A673 (cell line): ENCODE measurements at regions of chr18 and their contacts with region 1.

Region 1: DNA sequence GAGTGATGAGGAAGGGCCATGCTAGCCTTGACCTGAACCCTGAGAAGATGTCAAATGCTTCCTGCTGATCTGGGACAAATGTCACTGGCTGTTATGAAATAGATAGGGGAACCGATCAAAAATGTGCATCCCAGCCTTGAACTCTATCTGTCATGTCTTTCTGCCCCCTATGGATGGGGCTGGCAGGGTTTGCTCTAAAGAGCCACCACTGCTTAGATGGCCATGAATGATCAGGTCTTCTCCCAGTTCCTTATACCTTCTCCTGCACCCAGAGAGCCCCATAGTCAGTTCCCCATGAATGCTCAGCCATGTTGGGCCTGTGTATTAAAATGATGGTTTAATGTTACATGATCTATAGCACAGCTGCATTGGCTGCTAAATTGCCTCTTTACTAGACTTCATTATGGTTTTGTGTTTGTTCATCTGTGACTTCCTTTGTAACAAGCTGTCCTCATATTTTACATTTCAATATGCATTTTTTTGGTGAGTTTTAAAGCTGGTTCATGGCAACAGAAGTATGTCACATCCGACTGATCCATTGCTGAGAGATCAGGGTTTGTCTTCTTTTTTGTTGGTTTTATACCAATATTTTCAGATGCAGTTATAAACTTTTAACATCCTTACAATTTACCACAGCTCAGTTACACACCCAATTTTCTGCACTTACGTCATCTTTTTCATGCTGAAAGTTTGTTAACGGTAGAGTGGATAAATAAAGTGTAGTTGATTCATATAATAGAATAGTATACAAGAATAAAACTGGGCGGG is 56.3 kb upstream of the SMAD2 start:
- DNase-seq: no peak
- H3K4me3 ChIP-seq: no peak overlapping the region
- H3K27ac ChIP-seq: no peak overlapping the region
- H3K4me1 ChIP-seq: no peaks in the 10 kb centered on the region
- H3K27me3 ChIP-seq: no peaks in the 10 kb centered on the region
- CTCF ChIP-seq: no peak

Region 2: DNA sequence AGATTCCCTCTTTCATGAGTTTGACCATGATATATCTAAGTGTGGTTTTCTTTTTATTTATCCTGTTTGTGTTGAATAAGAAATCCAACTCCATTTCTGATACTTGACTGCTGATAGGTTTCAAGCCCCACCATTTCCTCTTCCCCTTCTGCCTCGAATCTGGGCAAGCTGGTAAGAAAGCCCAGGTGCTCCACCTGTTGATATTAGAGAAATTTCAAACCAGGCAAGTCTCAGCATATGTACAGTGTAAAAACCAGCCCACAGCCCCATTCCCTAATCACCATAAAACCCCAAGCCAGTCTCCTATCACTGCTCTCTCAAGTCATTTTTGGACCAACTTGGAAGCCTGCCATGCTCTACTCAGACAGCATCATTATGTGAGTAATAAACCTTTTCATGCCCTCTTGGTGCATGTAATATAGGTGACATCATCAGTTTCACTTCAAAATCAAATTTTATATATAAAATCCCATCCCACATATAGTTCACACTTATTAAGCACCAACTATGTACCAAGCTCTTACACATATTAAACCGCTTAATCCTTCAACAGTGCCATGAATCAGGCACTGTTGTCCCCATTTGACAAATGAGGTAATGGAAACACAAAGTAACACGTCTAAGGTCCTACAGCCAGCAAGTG is 102.9 kb before region 1 on chr18:
- CTCF ChIA-PET with region 1: no interaction called
- POLR2A ChIA-PET with region 1: no interaction called
- intact Hi-C with region 1: no loop called
- DNase-seq: peak; percentile 57
- H3K4me3 ChIP-seq: no peak overlapping the region
- H3K27ac ChIP-seq: no peak overlapping the region
- H3K4me1 ChIP-seq: peaks cover 8% of the 10 kb centered on the region
- H3K27me3 ChIP-seq: no peaks in the 10 kb centered on the region
- CTCF ChIP-seq: no peak

Region 3: DNA sequence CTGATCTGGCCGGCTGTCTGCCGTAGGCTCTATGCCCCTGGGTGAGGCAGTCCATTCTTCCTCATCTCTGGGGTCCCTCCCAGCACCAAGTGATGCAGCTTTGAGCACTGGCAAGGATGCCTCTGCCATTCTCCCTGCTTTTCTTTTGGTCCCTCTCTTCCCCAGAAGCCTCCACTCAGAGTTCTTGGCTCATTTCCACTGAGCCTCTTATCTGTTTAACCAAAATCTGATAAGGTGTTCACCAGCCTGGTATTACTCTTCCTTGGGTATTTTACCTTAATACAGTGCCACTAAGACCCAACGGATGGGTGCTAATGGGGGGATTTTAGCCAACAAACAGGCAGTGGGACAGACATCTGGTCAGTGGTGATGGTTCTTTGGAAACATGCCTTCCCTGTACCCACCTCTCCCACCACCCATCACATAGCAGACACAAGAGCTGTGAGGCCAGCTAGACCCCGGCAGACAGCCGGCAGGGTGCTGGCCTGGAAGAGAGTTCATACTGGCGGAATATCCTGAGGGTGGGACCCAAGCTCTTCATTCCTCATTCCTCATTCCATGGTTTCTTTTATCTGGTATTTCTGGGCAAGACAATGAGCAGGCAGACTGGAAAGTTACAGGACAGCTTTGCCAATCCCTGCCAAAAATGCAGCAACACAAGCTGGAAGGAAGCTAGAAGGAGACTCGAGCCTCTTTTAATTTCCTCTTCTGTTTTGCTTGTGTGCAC is 387.8 kb after region 1 on chr18:
- CTCF ChIA-PET with region 1: no interaction called
- POLR2A ChIA-PET with region 1: interaction called, 12 read pairs
- intact Hi-C with region 1: no loop called
- DNase-seq: no peak
- H3K4me3 ChIP-seq: no peak overlapping the region
- H3K27ac ChIP-seq: no peak overlapping the region
- H3K4me1 ChIP-seq: no peaks in the 10 kb centered on the region
- H3K27me3 ChIP-seq: peaks cover 11% of the 10 kb centered on the region
- CTCF ChIP-seq: no peak